CD8-positive, alpha-beta T cell (primary cell): ENCODE measurements at regions of chr15 and their contacts with region 1.

Region 1: DNA sequence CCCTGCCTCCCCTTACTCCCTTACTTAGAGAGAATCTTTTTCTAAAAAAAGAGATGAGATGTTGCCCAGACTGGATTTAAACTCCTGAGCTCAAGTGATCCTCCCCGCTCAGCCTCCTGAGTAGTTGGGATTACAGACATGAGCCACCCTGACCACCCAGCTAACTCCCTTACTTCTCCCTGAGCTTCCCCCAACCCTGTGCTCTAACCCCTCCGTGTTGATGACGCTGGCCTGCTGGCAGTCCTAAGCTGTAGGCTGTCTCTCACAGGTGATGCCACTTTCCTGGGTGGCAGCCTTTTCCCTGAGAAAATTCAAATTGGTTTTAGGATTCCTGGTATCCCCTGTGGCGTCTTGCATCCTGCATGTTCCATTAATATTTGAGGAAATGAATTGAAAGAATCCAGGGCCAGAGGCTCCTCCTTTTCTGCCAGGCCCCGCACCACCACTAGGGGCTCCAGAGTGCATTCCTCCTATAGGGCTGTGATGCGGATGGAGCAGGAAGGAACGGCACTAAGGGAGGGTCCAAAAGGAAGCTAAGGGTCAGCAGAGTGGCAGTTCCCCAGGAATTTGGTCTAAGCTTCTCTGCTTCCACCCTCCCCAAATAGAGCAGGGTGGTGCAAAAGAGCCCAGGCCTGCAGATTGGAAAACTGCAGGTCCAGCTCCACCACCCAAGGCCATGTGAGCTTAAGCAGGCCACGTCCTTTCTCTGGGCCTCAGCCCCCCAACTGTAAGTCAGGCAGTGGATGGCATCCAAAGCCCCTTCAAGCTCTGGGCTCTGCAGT is 101.1 kb downstream of the DAPK2 start:
- DNase-seq: peak; percentile 36 to 79 (median 68)
- ATAC-seq: peak; percentile 98
- H3K4me3 ChIP-seq: no peak overlapping the region
- H3K4me3 Mint-ChIP-seq: no peak overlapping the region
- H3K27ac ChIP-seq: no peak overlapping the region
- H3K27ac Mint-ChIP-seq: peak overlapping the region; percentile 42
- H3K4me1 ChIP-seq: peaks cover 7% of the 10 kb centered on the region
- H3K4me1 Mint-ChIP-seq: peaks cover 18% of the 10 kb centered on the region
- H3K27me3 ChIP-seq: no peaks in the 10 kb centered on the region
- H3K27me3 Mint-ChIP-seq: no peaks in the 10 kb centered on the region
- CTCF ChIP-seq: peak; percentile 89

Region 2: DNA sequence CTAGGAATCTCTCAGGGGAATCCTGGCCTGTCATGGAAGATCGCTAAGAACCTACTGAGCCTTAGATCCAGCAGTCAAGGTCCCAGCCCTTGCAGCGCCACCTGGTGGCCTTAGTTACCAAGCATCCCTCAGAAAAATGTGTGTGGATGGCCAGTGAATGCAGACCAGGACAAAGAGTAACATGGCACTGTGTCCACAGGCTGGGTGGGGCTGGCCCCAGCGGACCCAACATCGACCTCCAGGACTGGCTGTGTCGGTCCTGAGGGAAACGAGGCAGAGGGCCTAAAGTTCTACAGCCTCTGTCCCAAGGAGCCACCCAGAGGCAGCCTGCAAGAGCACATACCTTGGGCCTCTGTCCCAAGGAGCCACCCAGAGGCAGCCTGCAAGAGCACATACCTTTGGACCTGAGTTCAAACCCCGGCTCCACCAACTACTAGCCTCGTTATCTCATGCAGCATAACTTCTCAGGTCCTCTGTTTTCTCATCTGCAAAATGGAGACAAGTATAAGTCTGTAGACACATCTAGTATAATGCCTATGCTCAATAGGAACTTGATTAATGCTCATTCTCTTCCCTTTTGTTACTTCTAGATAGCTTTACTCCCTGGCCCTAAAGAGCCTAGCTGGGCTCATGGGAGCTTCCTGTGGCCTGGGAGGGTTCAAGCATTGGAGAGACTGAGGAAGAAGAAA is 54.0 kb before region 1 on chr15:
- CTCF ChIA-PET with region 1: interaction called, 40 read pairs
- POLR2A ChIA-PET with region 1: no interaction called
- intact Hi-C with region 1: loop called in 1 of 2 experiments (anchors 10 kb)
- DNase-seq: peak; percentile 48 to 83 (median 75)
- ATAC-seq: no peak
- H3K4me3 ChIP-seq: peak overlapping the region in 1 of 2 experiments; percentile 8
- H3K4me3 Mint-ChIP-seq: peak overlapping the region; percentile 5
- H3K27ac ChIP-seq: peak overlapping the region; percentile 35 to 68
- H3K27ac Mint-ChIP-seq: peak overlapping the region; percentile 90
- H3K4me1 ChIP-seq: peaks cover 65% of the 10 kb centered on the region
- H3K4me1 Mint-ChIP-seq: peaks cover 69% of the 10 kb centered on the region
- H3K27me3 ChIP-seq: no peaks in the 10 kb centered on the region
- H3K27me3 Mint-ChIP-seq: no peaks in the 10 kb centered on the region
- CTCF ChIP-seq: peak; percentile 71

Region 3: DNA sequence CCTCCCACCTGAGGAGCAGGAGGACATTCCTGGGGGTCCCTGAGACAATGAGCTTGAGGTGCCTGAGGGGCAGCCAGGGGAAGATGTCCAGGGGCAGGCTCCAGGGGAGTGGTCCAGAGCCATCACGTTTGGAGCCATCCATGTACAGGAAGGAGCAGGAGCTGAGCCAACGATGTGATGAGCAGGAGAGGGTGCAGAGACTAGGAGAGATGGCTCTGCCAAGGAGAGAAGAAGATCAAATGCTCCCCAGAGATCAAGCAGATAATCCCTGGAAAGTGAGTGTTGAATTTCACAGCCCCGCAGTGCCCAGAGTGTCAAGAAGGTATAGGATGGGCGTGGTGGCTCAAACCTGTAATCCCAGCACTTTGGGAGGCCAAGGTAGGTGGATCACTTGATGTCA is 13.6 kb before region 1 on chr15:
- CTCF ChIA-PET with region 1: interaction called, 15 read pairs
- POLR2A ChIA-PET with region 1: no interaction called
- intact Hi-C with region 1: no loop called
- DNase-seq: no peak
- ATAC-seq: no peak
- H3K4me3 ChIP-seq: no peak overlapping the region
- H3K4me3 Mint-ChIP-seq: no peak overlapping the region
- H3K27ac ChIP-seq: no peak overlapping the region
- H3K27ac Mint-ChIP-seq: no peak overlapping the region
- H3K4me1 ChIP-seq: no peaks in the 10 kb centered on the region
- H3K4me1 Mint-ChIP-seq: peaks cover 4% of the 10 kb centered on the region
- H3K27me3 ChIP-seq: no peaks in the 10 kb centered on the region
- H3K27me3 Mint-ChIP-seq: no peaks in the 10 kb centered on the region
- CTCF ChIP-seq: no peak

Region 4: GRCh38 chr15:64010719-64011118 is 65.5 kb after region 1 on chr15:
- CTCF ChIA-PET with region 1: interaction called, 21 read pairs
- POLR2A ChIA-PET with region 1: no interaction called
- intact Hi-C with region 1: loop called in 1 of 2 experiments (anchors 1 kb)
- DNase-seq: peak; percentile 78 to 97 (median 89)
- ATAC-seq: peak; percentile 89
- H3K4me3 ChIP-seq: no peak overlapping the region
- H3K4me3 Mint-ChIP-seq: peak overlapping the region; percentile 72
- H3K27ac ChIP-seq: peak overlapping the region; percentile 52 to 67
- H3K27ac Mint-ChIP-seq: peak overlapping the region; percentile 98
- H3K4me1 ChIP-seq: peaks cover 29% of the 10 kb centered on the region
- H3K4me1 Mint-ChIP-seq: peaks cover 40% of the 10 kb centered on the region
- H3K27me3 ChIP-seq: no peaks in the 10 kb centered on the region
- H3K27me3 Mint-ChIP-seq: no peaks in the 10 kb centered on the region
- CTCF ChIP-seq: no peak

Region 5: DNA sequence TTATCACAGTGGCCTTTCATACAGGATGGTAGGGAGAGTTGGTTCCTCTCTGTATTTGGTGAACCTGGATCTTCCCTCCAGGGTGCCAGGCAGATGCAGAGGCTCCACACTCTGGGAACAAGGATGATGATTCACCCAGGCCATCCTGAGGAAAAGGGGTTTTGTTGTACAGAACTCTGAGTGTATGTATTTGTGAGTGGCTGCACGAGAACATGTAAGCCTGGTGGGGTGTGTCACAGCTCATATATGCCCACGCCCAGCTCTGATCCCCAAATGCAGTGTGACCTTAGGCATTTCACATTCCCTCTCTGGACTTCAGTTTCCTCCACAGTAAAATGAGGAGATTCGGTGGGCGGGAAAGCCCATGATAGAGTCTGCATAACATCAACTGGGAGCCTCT is 1277.7 kb after region 1 on chr15:
- CTCF ChIA-PET with region 1: no interaction called
- POLR2A ChIA-PET with region 1: no interaction called
- intact Hi-C with region 1: no loop called
- DNase-seq: no peak
- ATAC-seq: no peak
- H3K4me3 ChIP-seq: no peak overlapping the region
- H3K4me3 Mint-ChIP-seq: no peak overlapping the region
- H3K27ac ChIP-seq: no peak overlapping the region
- H3K27ac Mint-ChIP-seq: no peak overlapping the region
- H3K4me1 ChIP-seq: no peaks in the 10 kb centered on the region
- H3K4me1 Mint-ChIP-seq: no peaks in the 10 kb centered on the region
- H3K27me3 ChIP-seq: no peaks in the 10 kb centered on the region
- H3K27me3 Mint-ChIP-seq: no peaks in the 10 kb centered on the region
- CTCF ChIP-seq: no peak